ENCODE measurements at regions of chr18 and their contacts with region 1.

Region 1: DNA sequence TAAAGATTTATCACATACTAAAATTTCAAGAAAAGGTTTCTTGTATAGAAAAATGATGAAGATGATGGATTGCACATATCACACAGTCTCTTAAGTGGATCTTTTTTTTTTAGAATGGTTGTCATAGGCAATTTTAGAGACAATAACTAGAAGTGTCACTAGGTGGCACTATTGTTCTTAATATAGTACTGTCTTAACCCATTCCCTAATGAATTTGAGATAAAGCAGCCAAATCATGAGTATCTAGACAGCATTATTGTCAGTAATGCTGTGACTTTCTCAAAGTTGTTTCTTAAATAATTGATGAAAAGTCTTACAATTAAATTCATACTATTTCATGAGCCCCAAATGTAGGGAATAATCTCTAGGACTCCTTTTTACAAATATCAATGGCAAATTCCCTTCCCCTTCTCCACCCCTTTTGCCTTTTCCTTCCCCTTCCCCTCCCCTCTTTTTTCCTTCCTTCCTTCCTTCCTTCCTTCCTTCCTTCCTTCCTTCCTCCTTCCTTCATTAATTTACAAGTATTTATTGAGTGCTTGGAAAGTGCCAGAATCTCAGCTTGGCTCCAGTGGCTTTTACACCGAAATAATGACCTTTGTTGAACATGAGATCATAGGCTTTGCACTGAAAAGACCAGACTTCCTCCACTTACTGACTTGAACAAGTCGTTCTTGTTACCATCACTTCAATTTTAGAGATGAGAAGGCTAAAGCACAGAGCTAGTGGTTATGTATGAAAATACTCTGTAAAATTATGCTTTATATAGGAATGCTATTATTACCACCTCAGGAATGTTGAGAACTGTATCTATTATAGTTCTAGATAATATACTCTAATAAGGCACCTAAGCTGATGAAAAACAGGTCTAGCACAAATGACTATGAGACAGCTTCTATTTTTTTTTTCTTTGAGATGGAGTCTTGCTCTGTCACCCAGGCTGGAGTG is 19.8 kb downstream of the MYL12B start:
- DNase-seq: peak; percentile 60
- H3K4me3 ChIP-seq: no peak overlapping the region
- H3K27me3 ChIP-seq: no peaks in the 10 kb centered on the region
- CTCF ChIP-seq: peak; percentile 31; the same call in 1 of the 2 replicates

Region 2: GRCh38 chr18:3297025-3297984 is 15.6 kb after region 1 on chr18:
- CTCF ChIA-PET with region 1: interaction called, 10 read pairs
- POLR2A ChIA-PET with region 1: no interaction called
- DNase-seq: peak; percentile 37
- H3K4me3 ChIP-seq: peak overlapping the region; percentile 35
- H3K27me3 ChIP-seq: no peaks in the 10 kb centered on the region
- CTCF ChIP-seq: no peak; the same call in 1 of the 2 replicates

Region 3: GRCh38 chr18:3447895-3448837 is 166.4 kb after region 1 on chr18:
- CTCF ChIA-PET with region 1: interaction called, 7 read pairs
- POLR2A ChIA-PET with region 1: interaction called, 23 read pairs
- DNase-seq: peak; percentile 92
- H3K4me3 ChIP-seq: peak overlapping the region; percentile 96
- H3K27me3 ChIP-seq: no peaks in the 10 kb centered on the region
- CTCF ChIP-seq: 0 out of 2 replicates have a peak, but pooled peaks have one; percentile 13

Region 4: GRCh38 chr18:3454365-3455089 is 172.8 kb after region 1 on chr18:
- CTCF ChIA-PET with region 1: interaction called, 12 read pairs
- POLR2A ChIA-PET with region 1: no interaction called
- DNase-seq: no peak
- H3K4me3 ChIP-seq: peak overlapping the region; percentile 26
- H3K27me3 ChIP-seq: no peaks in the 10 kb centered on the region
- CTCF ChIP-seq: peak; percentile 70

Region 5: GRCh38 chr18:3585656-3586509 is 304.2 kb after region 1 on chr18:
- CTCF ChIA-PET with region 1: interaction called, 14 read pairs
- POLR2A ChIA-PET with region 1: no interaction called
- DNase-seq: no peak
- H3K4me3 ChIP-seq: no peak overlapping the region
- H3K27me3 ChIP-seq: no peaks in the 10 kb centered on the region
- CTCF ChIP-seq: peak; percentile 85